Left ventricle myocardium superior (tissue), 1 donor: ENCODE measurements at regions of chr15 and their contacts with region 1.

Region 1: GRCh38 chr15:101258238-101259144 is 6.6 kb upstream of the CHSY1 start:
- DNase-seq: peak; percentile 46
- ATAC-seq: peak; percentile 67

Region 2: DNA sequence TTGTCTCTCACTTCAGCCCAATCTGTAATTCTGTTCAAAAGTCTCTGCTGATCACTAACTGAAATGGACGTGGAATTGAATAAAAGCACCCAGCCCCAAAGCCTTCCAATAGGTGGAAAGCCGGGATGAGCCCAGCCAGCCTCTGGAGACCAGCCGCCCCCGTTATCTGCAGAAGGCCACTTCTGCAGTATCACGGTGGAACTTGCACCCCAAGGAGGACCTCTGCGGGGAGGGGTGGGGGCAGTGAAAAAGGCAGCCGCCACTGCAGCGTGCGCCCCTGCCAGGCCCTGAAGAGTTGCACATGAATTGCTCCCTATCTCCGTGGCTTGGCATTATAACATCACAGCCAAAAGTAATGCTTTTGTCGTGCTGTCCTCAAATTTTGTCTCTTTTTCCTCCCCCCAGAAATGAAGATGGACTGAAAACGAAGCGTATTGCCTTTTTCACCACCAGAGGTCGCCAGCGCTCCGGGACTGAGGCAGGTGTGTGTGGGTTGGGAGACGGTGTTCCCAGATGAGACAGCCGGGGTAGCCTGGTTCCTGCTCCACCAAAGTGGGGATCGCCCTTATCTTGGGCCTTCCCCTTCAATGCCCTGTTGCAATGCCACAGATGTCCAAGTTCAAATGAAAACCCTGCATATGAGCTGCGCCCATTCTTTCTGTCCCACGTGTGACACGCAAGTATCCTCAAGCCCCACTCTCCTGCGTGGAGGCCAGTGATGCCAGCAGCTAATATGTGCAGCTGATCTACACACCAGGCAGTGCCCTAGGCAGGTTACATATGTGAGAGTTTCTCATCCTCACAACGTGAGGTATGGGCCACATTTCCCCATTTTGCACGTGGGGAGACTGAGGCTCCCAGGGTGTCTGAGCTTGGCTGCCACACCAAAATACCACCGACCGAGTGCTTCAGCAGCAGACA is 243.3 kb before region 1 on chr15:
- intact Hi-C with region 1: loop called (anchors 2 kb)
- DNase-seq: peak; percentile 84
- ATAC-seq: peak; percentile 79

Region 3: DNA sequence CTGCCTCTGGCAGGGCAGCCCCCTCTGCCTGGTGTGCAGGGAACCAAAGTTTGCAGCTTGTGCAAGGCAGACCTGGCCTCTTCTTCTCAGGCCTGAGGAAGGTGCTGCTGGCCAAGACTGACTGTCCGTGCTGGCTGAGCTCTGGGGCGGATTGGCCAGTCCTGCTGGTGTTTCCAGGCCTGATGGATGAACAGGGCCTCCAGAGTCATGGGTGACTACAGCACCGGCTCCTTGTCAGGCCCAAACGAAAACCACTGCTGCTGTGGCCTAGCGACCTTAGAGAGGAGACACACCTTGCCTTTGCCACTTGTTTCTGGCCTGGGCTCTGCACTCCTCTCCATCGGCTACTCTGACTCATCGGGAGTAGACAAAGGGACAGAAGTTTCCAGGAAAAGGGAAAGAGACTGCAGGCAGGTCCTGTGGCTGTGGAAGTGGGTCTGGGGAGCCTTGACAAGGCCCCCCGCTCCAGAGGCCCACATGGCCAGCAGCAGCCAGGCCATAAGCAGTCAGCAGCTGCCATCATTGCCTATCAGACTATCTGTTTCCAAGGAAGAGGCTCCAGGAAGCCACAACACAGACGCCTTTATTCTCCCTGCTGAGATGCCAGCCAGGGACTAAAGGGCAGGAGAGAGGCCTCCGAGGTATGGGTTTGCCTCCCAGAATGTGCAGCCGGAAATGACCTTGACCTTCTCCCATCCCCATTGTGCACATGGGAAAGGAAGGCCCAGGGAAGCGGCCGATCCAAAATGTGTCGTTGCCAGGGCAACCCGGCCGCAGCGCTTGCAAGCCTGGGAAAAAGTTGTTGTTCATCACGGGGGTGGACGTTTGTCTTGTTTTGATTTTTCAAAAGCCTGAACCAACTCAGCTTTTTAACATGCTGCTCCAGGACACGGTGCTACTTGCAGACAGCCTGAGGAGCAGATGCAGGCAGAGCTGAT is 167.1 kb before region 1 on chr15:
- intact Hi-C with region 1: loop called (anchors 5 kb)
- DNase-seq: peak; percentile 74
- ATAC-seq: peak; percentile 66

Region 4: DNA sequence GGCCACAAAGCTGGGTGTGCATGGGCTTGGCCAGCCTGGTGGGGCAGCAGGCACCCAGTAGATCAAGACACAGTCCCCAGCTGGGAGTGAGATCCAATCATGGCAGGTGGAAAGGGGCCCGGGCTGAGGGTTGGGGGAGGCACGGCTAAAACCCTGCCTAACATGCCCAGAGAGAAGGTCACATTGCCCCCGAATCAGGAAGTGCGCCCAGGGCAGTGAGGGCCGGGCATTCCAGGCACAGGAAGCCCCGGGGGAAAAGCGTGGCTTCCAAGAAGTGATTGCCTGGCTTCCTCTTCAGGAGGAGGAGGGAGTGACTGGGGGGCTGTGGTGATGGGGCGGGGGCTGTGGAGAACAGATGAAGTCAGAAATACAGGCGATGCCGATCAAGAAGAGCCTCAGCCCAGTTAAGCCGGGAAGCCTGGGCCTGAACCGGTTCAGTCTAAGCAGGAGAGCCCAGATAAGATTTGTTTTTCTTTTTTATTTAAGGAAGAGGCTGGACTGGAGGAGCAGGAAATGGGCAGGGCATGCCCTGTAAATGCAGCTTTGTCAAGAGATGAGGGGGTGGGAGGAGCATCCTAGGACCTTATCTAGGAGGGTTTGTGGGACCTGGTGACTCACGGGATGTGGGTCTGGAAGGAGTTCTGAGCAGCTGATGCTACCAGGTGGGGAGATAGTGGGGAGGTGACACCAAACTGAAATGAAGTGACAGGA is 90.6 kb before region 1 on chr15:
- intact Hi-C with region 1: no loop called
- DNase-seq: peak; percentile 77
- ATAC-seq: peak; percentile 79